Ascending aorta (tissue), 2 donors: ENCODE measurements at regions of chr6 and their contacts with region 1.

Region 1: GRCh38 chr6:12289933-12290820 is at the start of gene EDN1:
- DNase-seq: peak in 1 of 2 donors; percentile 85
- H3K4me3 ChIP-seq: peak within 1 kb of the TSS; percentile 48 to 69
- H3K27ac ChIP-seq: peak within 1 kb of the TSS; percentile 19 to 65
- H3K4me1 ChIP-seq: peaks cover 4 to 23% of the 10 kb centered on the region in 2 donors
- H3K27me3 ChIP-seq: no peaks in the 10 kb centered on the region
- CTCF ChIP-seq: peak; percentile 31 to 61 (median 48)
- total RNA-seq, gene EDN1: 27.8 TPM

Region 2: GRCh38 chr6:11585426-11586016 is 704.7 kb before region 1 on chr6:
- intact Hi-C with region 1: loop called (anchors 5 kb)
- DNase-seq: no peak
- H3K4me3 ChIP-seq: no peak overlapping the region
- H3K27ac ChIP-seq: no peak overlapping the region
- H3K4me1 ChIP-seq: peaks cover 0 to 21% of the 10 kb centered on the region in 2 donors
- H3K27me3 ChIP-seq: no peaks in the 10 kb centered on the region
- CTCF ChIP-seq: peak; percentile 52 to 68 (median 58)

Region 3: DNA sequence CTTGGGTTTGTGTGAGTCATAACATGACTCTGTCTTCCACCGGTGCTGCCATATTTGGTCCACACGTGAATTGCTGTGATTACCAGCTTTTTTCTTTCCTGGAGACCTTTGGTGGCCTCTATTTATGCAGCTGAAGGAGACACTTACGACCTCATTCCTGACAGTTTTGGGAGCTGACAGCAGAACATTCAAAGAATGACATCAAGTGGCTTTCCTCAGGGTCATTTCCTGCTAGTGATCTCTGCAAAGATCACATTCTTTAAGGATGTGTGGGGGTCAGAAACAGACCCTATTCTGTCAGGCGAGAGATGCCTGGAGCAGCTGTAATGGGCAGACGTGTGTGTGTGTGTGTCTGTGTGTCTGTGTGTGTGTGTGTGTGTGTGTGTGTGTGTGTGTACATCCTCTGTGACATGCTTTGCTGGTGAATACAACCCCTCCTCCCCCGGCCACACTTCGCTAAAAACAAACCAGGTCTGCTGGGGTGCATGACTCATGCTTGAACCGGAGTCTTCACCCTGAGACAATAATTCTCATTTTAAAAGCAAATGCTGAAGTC is 637.1 kb before region 1 on chr6:
- intact Hi-C with region 1: loop called (anchors 5 kb)
- DNase-seq: no peak
- H3K4me3 ChIP-seq: no peak overlapping the region
- H3K27ac ChIP-seq: no peak overlapping the region
- H3K4me1 ChIP-seq: peaks cover 0 to 28% of the 10 kb centered on the region in 2 donors
- H3K27me3 ChIP-seq: no peaks in the 10 kb centered on the region
- CTCF ChIP-seq: no peak

Region 4: GRCh38 chr6:12383448-12383847 is 93.3 kb after region 1 on chr6:
- intact Hi-C with region 1: loop called (anchors 10 kb)
- DNase-seq: no peak
- H3K4me3 ChIP-seq: no peak overlapping the region
- H3K27ac ChIP-seq: peak overlapping the region; percentile 72 to 78
- H3K4me1 ChIP-seq: peaks cover 4 to 13% of the 10 kb centered on the region in 2 donors
- H3K27me3 ChIP-seq: no peaks in the 10 kb centered on the region
- CTCF ChIP-seq: no peak

Region 5: DNA sequence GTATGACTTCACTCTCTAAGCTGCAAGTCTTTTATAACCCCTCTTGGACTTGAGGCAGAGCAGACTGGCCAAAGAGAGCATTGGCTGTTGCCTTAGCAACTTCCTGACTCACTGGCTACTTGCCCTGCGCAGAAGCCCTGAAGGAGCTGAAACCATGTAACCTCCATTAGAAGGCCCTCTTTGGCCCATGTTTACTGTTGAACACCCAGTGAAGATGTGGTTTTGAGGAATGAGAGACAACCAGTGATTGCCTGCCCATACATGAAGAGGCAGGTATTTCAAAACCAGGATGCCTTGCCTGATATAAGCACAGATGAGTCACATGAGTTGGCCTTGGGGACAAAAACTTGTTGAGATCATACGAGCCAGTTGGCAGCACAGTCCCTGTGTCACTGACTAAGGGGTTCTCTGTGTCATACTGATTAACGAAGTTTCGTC is 182.4 kb after region 1 on chr6:
- intact Hi-C with region 1: loop called (anchors 5 kb)
- DNase-seq: peak; percentile 58 to 94
- H3K4me3 ChIP-seq: no peak overlapping the region
- H3K27ac ChIP-seq: peak overlapping the region; percentile 79 to 85
- H3K4me1 ChIP-seq: peaks cover 9 to 30% of the 10 kb centered on the region in 2 donors
- H3K27me3 ChIP-seq: no peaks in the 10 kb centered on the region
- CTCF ChIP-seq: no peak

Region 6: GRCh38 chr6:12545619-12546409 is 255.6 kb after region 1 on chr6:
- intact Hi-C with region 1: loop called (anchors 5 kb)
- DNase-seq: no peak
- H3K4me3 ChIP-seq: no peak overlapping the region
- H3K27ac ChIP-seq: peak overlapping the region; percentile 15 to 59
- H3K4me1 ChIP-seq: peaks cover 4 to 28% of the 10 kb centered on the region in 2 donors
- H3K27me3 ChIP-seq: no peaks in the 10 kb centered on the region
- CTCF ChIP-seq: no peak